K562 (cell line): ENCODE measurements at regions of chr2 and their contacts with region 1.

Region 1: DNA sequence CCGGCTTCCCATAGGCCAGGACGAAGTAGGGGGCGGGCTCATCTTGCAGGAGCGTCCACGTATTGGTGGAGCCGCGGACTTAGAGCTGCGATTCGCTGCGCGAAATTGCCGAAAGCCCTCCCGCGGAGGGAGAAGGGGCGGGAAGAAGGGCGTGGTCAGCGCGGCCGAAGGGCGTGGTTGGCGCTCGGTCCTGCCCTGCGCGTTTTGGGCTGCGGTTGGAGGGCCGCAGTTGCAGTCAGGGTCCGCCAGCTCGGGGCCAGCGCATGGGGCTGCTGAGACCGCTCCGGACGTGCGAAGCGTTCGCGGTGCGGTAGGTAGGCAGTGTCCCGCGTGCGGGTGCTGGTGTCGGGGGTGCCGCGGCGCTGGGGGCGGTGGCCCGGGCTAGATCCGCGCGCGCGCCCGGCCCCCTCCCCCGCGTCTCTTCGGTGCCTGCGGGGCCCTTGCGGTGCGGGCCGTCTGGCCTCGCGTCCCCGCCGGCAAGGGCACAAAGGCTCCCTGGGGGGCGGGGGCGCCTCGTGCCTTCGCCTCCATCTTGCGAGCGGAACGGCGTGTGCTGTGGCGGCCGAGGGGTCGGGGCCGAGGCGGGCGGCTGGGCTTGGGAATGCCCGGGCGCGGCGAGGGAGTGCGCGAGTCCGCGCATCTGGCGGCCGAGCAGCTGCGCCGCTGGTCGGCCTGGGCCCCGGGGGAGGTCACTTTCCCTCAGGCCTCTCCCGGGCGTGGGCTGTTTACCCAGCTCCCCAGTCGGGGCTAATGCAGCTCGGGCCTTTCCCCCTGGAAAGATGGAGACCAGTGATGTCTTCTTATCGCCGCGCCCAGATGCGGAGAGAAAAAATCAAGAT is at the start of gene CEP68:
- DNase-seq: peak; percentile 96 to 99 (median 97)
- ATAC-seq: peak; percentile 98
- H3K4me3 ChIP-seq: peak within 1 kb of the TSS; percentile 73
- H3K27ac ChIP-seq: peak within 1 kb of the TSS; percentile 81
- H3K4me1 ChIP-seq: peaks cover 12 to 29% of the 10 kb centered on the region in 2 experiments; a peak in 4 of 5 replicates
- H3K27me3 ChIP-seq: no peaks in the 10 kb centered on the region
- CTCF ChIP-seq: no peak
- EP300 ChIP-seq: peak; percentile 85
- POLR2A ChIP-seq: peak; percentile 81
- RAD21 ChIP-seq: no peak
- polyA plus RNA-seq, gene CEP68: 1.4 to 1.5 TPM

Region 2: GRCh38 chr2:64988420-64989125 is 67.9 kb before region 1 on chr2:
- CTCF ChIA-PET with region 1: no interaction called
- POLR2A ChIA-PET with region 1: interaction called, 4 read pairs
- in situ Hi-C with region 1: no loop called
- intact Hi-C with region 1: loop called (anchors 2 kb)
- DNase-seq: peak; percentile 88 to 92 (median 90)
- ATAC-seq: peak; percentile 83
- H3K4me3 ChIP-seq: peak overlapping the region; percentile 88
- H3K27ac ChIP-seq: peak overlapping the region; percentile 88
- H3K4me1 ChIP-seq: peaks cover 27% of the 10 kb centered on the region in 2 experiments; a peak in 4 of 5 replicates
- H3K27me3 ChIP-seq: no peaks in the 10 kb centered on the region
- CTCF ChIP-seq: peak; percentile 40 to 58 (median 52); a peak in 4 of 6 replicates
- EP300 ChIP-seq: no peak
- POLR2A ChIP-seq: peak; percentile 69
- RAD21 ChIP-seq: peak in 1 of 2 experiments; percentile 25; a peak in 3 of 4 replicates

Region 3: DNA sequence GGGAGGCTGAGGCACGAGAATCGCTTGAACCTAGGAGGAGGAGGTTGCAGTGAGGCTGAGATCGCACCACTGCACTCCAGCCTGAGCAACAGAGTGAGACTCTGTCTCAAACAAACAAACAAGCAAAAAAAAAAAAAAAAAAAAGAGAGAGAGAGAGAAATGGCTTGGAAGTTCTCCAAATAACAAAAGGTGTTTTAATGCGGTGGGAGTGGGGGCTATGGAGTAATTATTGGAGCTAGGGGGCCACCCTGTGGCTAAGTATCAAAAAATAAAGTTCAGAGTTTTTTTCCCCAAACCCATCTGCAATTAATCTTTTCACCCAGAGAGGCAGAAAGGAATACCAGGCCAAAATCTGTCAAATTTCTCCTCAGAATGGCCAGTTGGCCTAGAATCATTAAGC is 23.3 kb before region 1 on chr2:
- CTCF ChIA-PET with region 1: no interaction called
- POLR2A ChIA-PET with region 1: no interaction called
- in situ Hi-C with region 1: no loop called
- intact Hi-C with region 1: no loop called
- DNase-seq: peak; percentile 41 to 59 (median 52)
- ATAC-seq: peak; percentile 72
- H3K4me3 ChIP-seq: no peak overlapping the region
- H3K27ac ChIP-seq: no peak overlapping the region
- H3K4me1 ChIP-seq: peaks cover 3% of the 10 kb centered on the region in 2 experiments; a peak in 1 of 5 replicates
- H3K27me3 ChIP-seq: no peaks in the 10 kb centered on the region
- CTCF ChIP-seq: peak; percentile 34 to 62 (median 36); a peak in 4 of 6 replicates
- EP300 ChIP-seq: no peak
- POLR2A ChIP-seq: no peak
- RAD21 ChIP-seq: peak; percentile 12 to 59; a peak in 3 of 4 replicates

Region 4: DNA sequence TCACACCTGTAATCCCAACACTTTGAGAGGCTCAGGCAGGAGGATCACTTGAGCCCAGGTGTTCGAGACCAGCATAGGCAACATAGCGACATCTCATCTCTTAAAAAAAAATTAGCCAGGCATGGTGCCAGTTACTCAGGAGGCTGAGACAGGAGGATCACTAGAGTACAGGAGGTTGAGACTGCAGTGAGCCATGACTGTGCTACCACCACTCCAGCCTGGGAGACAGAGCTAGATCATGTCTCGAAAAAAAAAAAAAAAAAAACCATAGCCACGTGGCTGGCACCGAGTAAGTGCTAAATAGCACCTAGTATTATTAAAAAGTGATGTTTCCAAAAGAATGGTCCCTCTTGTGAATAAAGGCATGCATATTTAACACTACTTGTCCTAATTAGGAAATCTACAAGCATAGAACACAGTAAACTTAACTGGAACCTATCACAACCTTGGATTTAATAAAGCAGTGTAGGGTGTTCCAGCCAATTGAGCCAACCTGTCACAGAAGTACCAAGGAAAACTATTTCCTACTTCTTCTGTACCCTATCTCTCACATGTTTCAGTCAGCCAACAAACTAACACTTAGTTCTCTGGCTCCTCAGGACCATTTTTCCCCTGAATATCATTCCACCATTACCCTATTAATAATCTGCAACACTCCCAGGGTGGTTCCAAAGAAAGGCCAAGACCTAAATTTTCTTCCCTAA is 64.7 kb after region 1 on chr2:
- CTCF ChIA-PET with region 1: no interaction called
- POLR2A ChIA-PET with region 1: no interaction called
- in situ Hi-C with region 1: no loop called
- intact Hi-C with region 1: no loop called
- DNase-seq: no peak
- ATAC-seq: no peak
- H3K4me3 ChIP-seq: no peak overlapping the region
- H3K27ac ChIP-seq: no peak overlapping the region
- H3K4me1 ChIP-seq: peaks cover 3 to 18% of the 10 kb centered on the region in 2 experiments; a peak in 4 of 5 replicates
- H3K27me3 ChIP-seq: no peaks in the 10 kb centered on the region
- CTCF ChIP-seq: no peak
- EP300 ChIP-seq: no peak
- POLR2A ChIP-seq: no peak
- RAD21 ChIP-seq: no peak

Region 5: DNA sequence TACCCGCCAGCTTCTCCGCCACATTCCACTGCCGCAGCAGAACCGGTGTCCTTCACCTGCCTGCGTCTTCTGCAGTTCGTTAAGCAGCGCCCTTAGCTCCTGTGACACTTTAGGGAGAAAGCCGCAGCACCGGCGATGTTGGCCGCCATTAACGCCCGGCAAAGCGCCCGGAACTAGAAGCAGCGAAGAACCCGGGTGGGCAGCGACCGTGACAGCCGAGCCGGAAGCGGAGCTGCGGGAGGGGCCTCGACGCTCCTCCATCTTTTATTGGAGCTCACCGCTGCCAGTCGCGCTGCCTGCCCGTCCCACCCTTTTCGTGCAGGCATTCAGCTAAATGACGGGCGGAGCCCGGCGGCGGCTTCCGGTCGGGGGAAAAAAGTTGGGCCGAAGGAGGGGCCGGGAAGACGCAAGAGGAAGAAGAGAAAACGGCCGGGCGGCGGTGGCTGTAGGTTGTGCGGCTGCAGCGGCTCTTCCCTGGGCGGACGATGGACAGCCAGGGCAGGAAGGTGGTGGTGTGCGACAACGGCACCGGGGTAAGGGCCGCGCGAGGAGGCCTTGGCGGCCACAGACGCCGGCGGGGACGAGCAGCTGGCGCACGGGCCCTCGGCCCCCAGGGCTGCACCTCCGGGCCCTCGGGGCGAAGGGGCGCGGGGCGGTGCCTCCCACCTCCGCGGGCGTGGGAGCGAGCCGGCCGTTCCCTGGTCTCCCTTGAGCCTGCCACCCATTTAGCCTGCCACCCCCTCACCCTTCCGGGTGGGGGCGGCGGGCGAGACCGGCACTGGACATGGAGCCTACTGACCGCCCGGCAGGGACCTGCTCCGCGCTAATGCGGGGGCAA is 171.2 kb after region 1 on chr2 and contains the start of gene ACTR2:
- CTCF ChIA-PET with region 1: no interaction called
- POLR2A ChIA-PET with region 1: interaction called, 5 read pairs
- in situ Hi-C with region 1: no loop called
- intact Hi-C with region 1: loop called (anchors 2 kb)
- DNase-seq: peak; percentile 87 to 97 (median 92)
- ATAC-seq: peak; percentile 88
- H3K4me3 ChIP-seq: peak within 1 kb of the TSS; percentile 72
- H3K27ac ChIP-seq: peak within 1 kb of the TSS; percentile 90
- H3K4me1 ChIP-seq: peaks cover 9 to 12% of the 10 kb centered on the region in 2 experiments; a peak in 3 of 5 replicates
- H3K27me3 ChIP-seq: no peaks in the 10 kb centered on the region
- CTCF ChIP-seq: no peak
- EP300 ChIP-seq: peak; percentile 17; the same call in 1 of the 2 replicates
- POLR2A ChIP-seq: peak; percentile 96
- RAD21 ChIP-seq: no peak
- polyA plus RNA-seq, gene ACTR2: 47.3 to 57.3 TPM